Activated T-helper 2 cell treated with anti-CD3 and anti-CD28 coated beads, Interferon-gamma antibody, Interleukin-2, Interleukin-4, amounts not matched to agents 10 μg/mL and 5 μg/mL and 100 μg/mL, durations not matched to agents 14 hours and 24 hours and 36 hours (primary cell): ENCODE measurements at regions of chr11 and their contacts with region 1.

Region 1: GRCh38 chr11:113562981-113563461 is 87.8 kb upstream of the DRD2 start:
- DNase-seq: peak; percentile 14
- H3K4me3 Mint-ChIP-seq: no peak overlapping the region
- H3K27ac Mint-ChIP-seq: peak overlapping the region; percentile 79
- H3K4me1 Mint-ChIP-seq: peaks cover 28% of the 10 kb centered on the region
- H3K27me3 Mint-ChIP-seq: no peaks in the 10 kb centered on the region

Region 2: GRCh38 chr11:113447621-113448315 is 115.3 kb before region 1 on chr11:
- intact Hi-C with region 1: loop called (anchors 10 kb)
- DNase-seq: peak; percentile 13
- H3K4me3 Mint-ChIP-seq: no peak overlapping the region
- H3K27ac Mint-ChIP-seq: peak overlapping the region; percentile 90
- H3K4me1 Mint-ChIP-seq: peaks cover 26% of the 10 kb centered on the region
- H3K27me3 Mint-ChIP-seq: peaks cover 7% of the 10 kb centered on the region

Region 3: DNA sequence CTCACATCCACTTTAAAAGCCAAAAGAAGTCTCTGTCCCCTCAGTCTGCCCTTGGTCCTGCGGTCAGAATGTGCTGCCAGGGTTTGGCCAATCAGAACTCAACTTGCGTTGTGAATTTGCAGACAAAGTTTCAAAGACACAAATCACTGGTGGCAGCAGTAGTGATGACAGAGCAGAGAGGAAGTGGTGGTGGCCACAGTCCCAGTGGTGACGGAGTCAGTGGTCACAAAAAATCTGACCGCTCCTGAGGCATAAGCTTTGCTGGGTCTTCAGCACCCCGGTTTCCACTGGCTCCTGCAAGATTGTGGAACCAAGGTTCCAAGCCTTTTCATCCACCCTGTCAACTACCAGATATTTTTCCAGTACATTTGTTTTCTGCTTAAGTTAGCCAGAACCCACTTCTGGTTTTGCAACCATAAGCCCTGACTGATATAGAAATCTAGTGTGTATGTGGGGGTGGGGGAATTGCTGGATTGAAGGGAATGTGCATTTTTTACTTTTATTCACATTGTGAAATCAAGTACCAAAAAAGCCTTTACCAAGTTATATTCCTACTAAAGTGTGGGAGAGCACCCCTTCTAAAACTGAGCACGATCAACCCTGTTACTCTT is 30.8 kb after region 1 on chr11:
- intact Hi-C with region 1: loop called (anchors 2 kb)
- DNase-seq: peak; percentile 36
- H3K4me3 Mint-ChIP-seq: no peak overlapping the region
- H3K27ac Mint-ChIP-seq: peak overlapping the region; percentile 63
- H3K4me1 Mint-ChIP-seq: peaks cover 36% of the 10 kb centered on the region
- H3K27me3 Mint-ChIP-seq: peaks cover 26% of the 10 kb centered on the region

Region 4: DNA sequence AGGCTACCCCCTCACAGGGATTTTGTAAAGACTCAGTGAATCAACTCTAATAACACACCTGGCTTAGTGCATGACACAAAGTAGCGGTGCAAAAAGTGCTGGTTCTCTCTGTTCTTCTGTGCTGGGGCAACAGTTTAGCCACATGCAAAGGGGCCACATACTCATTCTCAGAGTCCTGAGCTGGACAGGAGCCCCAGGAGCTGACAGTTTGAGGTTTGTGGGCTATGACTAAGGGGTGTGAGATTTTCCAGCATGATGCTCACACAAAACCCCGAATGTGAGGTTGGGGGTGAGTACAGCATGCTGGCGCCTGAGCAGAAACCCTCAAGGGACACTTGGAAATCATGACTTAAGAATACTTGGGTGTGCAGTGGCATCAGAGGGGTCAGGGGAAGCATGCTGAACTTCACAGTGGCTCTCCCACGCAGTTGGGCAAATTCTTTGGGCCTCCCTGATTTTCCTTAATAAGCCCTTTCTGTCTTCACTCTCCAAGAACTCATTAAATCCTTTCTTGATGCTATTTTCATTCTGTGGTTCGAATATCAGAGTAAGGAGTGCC is 112.1 kb after region 1 on chr11:
- intact Hi-C with region 1: loop called (anchors 5 kb)
- DNase-seq: no peak
- H3K4me3 Mint-ChIP-seq: no peak overlapping the region
- H3K27ac Mint-ChIP-seq: no peak overlapping the region
- H3K4me1 Mint-ChIP-seq: peaks cover 30% of the 10 kb centered on the region
- H3K27me3 Mint-ChIP-seq: no peaks in the 10 kb centered on the region